Activated naive CD4-positive, alpha-beta T cell treated with anti-CD3 and anti-CD28 coated beads for 36 hours (primary cell): ENCODE measurements at regions of chr7 and their contacts with region 1.

Region 1: DNA sequence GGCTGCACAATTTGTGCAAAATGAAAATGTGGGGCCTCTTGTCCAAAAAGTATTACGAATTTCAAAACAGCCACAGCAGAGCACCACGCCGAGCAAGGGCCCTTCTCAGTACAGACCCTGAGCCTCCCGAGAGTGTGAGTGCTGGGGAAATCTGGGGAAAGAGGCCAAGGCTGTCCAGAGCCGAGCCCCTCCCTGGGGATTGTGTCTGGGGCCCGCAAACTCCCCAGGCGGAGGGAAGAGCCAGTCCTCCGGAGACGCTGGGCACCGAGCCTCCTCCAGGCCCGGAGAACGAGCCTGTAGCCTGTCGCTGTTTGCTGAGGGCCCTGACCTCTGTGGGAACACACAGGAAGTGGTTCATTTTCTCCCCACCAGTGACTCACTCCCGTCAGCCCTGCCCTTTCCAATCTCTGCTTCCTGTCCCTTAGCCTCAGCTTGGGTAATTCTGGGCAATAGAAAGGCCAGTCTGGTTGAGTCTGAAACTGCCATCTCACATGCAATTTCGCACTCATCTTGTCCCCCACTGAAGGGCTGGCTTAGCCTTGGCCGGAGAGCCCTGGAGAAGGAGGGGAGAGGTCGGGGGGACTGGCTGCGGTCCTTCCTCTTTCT is 19.5 kb upstream of the GNA12 start:
- DNase-seq: peak; percentile 90
- H3K4me3 Mint-ChIP-seq: peak overlapping the region; percentile 72
- H3K27ac Mint-ChIP-seq: peak overlapping the region; percentile 94
- H3K4me1 Mint-ChIP-seq: peaks cover 21% of the 10 kb centered on the region
- H3K27me3 Mint-ChIP-seq: no peaks in the 10 kb centered on the region

Region 2: DNA sequence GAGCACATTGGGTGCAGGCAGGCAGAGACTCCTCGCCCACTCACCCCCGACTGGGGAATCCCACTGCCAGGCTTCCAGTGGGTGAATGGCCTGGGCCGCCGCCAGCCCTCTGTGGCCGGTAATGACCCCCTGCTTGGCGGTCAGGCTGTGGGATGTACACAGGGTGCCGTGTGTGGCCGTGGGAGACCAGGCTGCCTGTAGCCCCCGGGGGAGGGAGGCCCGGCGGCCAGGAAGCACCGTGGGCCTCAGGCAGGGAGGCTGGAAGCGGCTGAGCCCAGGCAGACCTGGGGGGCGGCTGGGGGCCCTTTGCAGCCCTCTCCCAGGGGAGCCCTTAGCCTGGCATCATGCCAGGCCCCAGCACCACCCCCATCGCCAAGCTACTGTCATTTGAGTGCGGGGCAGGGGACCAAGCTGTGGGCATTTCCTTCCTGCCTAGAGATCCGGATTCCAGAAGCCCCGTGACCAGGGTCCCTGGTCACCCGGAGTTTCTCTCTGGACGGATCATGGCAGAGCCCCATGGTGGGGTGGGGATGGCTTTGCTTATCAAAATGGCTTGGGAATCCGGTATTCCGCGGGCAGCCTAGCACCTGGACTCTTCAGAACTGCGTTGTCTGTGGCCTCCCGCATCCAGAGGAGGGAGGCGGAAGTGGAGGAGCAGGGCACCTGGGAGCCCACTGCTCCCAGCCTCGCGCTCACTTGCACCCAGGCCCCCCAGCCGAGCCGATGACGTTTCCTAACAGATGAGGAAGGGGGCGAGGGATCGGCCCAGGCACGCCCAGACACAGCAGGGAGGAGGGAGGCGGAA is 230.6 kb before region 1 on chr7:
- CTCF ChIA-PET with region 1: no interaction called
- intact Hi-C with region 1: no loop called
- DNase-seq: peak; percentile 67
- H3K4me3 Mint-ChIP-seq: peak overlapping the region; percentile 92
- H3K27ac Mint-ChIP-seq: peak overlapping the region; percentile 53
- H3K4me1 Mint-ChIP-seq: peaks cover 15% of the 10 kb centered on the region
- H3K27me3 Mint-ChIP-seq: no peaks in the 10 kb centered on the region

Region 3: DNA sequence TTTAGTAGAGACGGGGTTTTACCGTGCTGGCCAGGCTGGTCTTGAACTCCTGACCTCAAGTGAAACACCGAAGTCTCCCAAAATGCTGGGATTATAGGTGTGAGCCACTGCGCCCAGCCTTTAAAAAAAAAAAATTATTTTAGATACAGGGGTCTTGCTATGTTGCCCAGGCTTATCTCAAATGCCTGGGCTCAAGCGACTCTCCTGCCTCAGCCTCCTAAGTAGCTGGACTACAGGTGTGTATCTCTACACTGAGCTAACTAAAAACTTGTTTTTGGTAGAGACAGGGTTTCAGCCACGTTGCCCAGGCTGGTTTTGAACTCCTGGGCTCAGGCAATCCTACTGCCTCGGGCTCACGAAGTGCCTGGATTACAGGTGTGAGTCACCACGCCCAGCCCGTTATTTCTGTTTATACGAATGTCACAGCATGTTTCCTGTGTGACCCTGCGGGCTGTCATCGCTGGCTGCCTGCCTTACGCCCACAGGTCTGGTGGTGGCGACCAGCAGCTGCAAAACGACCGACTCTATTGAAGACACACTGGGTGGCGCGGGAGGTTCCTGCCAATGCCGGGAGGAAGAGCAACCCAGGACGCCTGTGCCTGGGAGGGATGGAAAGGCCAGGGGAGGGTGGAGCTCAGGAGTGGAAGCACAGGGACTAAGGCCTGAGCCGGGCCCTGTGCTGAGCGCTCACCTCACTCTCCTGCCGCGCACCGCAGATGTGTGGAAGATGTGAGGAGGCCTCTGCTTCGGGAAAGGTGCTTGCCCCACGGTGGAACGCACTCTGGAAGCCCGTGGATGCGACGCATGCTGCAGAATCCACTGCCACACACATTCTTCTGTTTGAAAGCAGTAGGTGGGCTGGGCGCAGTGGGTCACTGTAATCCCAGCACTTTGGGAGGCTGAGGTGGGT is 142.7 kb before region 1 on chr7:
- CTCF ChIA-PET with region 1: interaction called, 5 read pairs
- intact Hi-C with region 1: loop called (anchors 5 kb)
- DNase-seq: peak; percentile 95
- H3K4me3 Mint-ChIP-seq: no peak overlapping the region
- H3K27ac Mint-ChIP-seq: peak overlapping the region; percentile 13
- H3K4me1 Mint-ChIP-seq: peaks cover 47% of the 10 kb centered on the region
- H3K27me3 Mint-ChIP-seq: peaks cover 1% of the 10 kb centered on the region

Region 4: GRCh38 chr7:2878306-2878705 is 14.7 kb after region 1 on chr7:
- CTCF ChIA-PET with region 1: interaction called, 5 read pairs
- intact Hi-C with region 1: loop called (anchors 1 kb)
- DNase-seq: no peak
- H3K4me3 Mint-ChIP-seq: no peak overlapping the region
- H3K27ac Mint-ChIP-seq: no peak overlapping the region
- H3K4me1 Mint-ChIP-seq: peaks cover 38% of the 10 kb centered on the region
- H3K27me3 Mint-ChIP-seq: no peaks in the 10 kb centered on the region

Region 5: GRCh38 chr7:2894118-2894940 is 30.8 kb after region 1 on chr7:
- CTCF ChIA-PET with region 1: interaction called, 20 read pairs
- intact Hi-C with region 1: no loop called
- DNase-seq: peak; percentile 83
- H3K4me3 Mint-ChIP-seq: peak overlapping the region; percentile 73
- H3K27ac Mint-ChIP-seq: peak overlapping the region; percentile 96
- H3K4me1 Mint-ChIP-seq: peaks cover 24% of the 10 kb centered on the region
- H3K27me3 Mint-ChIP-seq: no peaks in the 10 kb centered on the region

Region 6: DNA sequence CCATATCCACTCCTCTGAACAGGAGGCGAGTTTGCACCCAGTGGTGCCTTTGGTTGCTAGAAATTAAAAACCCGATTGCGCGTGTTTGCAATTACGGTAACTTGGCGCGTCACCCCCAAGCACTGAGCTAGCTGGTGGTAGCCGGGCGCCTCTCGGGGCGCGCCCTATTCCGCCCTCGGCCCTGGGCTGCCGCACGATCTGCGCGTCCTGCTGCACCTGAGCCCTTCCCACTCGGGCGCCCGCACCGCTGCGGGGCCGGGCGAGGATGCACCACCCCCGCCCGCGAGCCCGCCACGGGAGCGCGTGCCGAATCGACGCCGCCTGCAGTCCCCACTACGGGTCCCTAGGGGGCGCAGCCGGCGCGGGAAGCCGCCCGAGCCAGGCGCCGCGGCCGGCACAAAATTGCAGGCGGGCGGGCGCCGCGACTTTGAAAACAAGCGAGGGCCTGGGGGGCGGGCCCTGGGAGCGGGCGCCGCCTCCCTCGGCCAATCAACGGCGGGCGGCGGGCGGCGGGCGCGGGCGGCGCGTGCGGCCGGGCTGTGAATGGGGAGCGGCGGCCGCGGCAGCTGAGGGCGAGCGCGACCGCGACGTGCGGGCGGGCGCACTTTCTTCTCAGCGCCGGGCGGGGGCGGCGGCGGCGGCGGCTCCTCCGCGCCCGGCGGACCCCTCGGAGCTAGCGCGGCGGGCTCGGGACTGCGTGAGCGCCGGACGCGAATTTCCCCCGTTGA is 437.3 kb after region 1 on chr7 and contains the start of gene SDK1:
- CTCF ChIA-PET with region 1: interaction called, 6 read pairs
- intact Hi-C with region 1: loop called (anchors 2 kb)
- DNase-seq: peak; percentile 89
- H3K4me3 Mint-ChIP-seq: peak within 1 kb of the TSS; percentile 72
- H3K27ac Mint-ChIP-seq: no peak within 1 kb of the TSS
- H3K4me1 Mint-ChIP-seq: peaks cover 8% of the 10 kb centered on the region
- H3K27me3 Mint-ChIP-seq: peaks cover 17% of the 10 kb centered on the region
- total RNA-seq, gene SDK1: 1.3 to 2.0 TPM

Region 7: DNA sequence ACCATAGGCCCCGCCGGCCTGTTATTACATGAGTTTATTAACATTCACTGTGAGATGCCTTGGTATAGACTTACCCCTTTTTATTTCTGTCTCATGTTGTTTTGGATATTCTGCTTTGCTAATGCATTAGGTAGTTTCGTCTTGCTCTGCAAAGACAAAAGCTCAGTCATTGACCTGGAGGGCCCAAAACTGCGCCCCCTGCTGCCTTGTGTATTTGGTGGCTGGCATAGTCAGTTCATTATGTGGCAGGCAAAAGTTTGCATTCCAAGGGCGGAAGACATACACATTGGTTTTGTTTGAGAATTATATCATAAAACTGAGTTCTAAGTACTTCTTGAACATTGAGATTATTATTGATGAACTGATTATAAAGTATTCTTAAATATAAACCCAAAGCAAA is 810.0 kb after region 1 on chr7:
- CTCF ChIA-PET with region 1: interaction called, 7 read pairs
- intact Hi-C with region 1: loop called (anchors 5 kb)
- DNase-seq: peak; percentile 78
- H3K4me3 Mint-ChIP-seq: no peak overlapping the region
- H3K27ac Mint-ChIP-seq: no peak overlapping the region
- H3K4me1 Mint-ChIP-seq: no peaks in the 10 kb centered on the region
- H3K27me3 Mint-ChIP-seq: no peaks in the 10 kb centered on the region